CD4-positive, alpha-beta T cell (primary cell): ENCODE measurements at regions of chr11 and their contacts with region 1.

Region 1: DNA sequence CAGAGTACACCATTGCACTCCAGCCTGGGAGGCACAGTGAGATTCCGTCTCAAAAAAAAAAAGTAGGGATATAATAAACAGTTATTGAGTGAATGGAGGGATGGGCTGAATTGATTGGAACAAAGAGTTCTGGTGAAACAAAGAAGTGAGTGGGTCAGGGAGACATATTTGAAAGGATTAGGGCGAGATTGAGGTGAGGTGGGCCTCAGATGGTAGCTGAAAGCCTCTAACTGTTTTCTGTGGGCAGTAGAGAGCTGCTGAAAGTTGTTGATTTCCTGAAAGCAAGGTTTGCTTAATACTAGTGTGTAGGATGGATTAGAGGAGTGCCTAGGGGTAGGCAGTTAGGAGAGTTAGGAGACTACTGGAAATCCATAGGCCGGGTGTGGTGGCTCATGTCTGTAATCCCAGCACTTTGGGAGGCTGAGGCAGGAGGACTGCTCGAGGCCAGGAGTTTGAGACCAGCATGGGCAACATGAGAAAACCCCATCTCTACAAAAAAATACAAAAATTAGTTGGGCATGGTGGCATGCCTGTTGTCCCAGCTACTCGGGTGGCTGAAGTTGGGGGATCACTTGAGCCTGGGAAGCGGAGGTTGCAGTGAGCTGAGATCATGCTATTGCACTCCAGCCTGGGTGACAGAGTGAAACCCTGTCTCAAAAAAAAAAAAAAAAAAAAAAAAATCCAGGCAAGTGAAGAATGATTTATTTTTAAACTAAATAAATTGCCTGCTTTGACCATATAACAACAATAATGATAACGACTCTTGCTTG is 41.4 kb upstream of the PTPRJ start:
- DNase-seq: no peak
- ATAC-seq: no peak
- H3K4me3 ChIP-seq: no peak overlapping the region
- H3K4me3 Mint-ChIP-seq: no peak overlapping the region
- H3K27ac ChIP-seq: no peak overlapping the region
- H3K27ac Mint-ChIP-seq: no peak overlapping the region
- H3K4me1 ChIP-seq: peaks cover 13% of the 10 kb centered on the region
- H3K4me1 Mint-ChIP-seq: peaks cover 17% of the 10 kb centered on the region
- H3K27me3 ChIP-seq: no peaks in the 10 kb centered on the region
- H3K27me3 Mint-ChIP-seq: no peaks in the 10 kb centered on the region
- CTCF ChIP-seq: no peak

Region 2: GRCh38 chr11:47689480-47689879 is 249.5 kb before region 1 on chr11:
- CTCF ChIA-PET with region 1: no interaction called
- POLR2A ChIA-PET with region 1: no interaction called
- intact Hi-C with region 1: no loop called
- DNase-seq: no peak
- ATAC-seq: no peak
- H3K4me3 ChIP-seq: no peak overlapping the region
- H3K4me3 Mint-ChIP-seq: no peak overlapping the region
- H3K27ac ChIP-seq: no peak overlapping the region
- H3K27ac Mint-ChIP-seq: no peak overlapping the region
- H3K4me1 ChIP-seq: no peaks in the 10 kb centered on the region
- H3K4me1 Mint-ChIP-seq: no peaks in the 10 kb centered on the region
- H3K27me3 ChIP-seq: no peaks in the 10 kb centered on the region
- H3K27me3 Mint-ChIP-seq: no peaks in the 10 kb centered on the region
- CTCF ChIP-seq: no peak

Region 3: DNA sequence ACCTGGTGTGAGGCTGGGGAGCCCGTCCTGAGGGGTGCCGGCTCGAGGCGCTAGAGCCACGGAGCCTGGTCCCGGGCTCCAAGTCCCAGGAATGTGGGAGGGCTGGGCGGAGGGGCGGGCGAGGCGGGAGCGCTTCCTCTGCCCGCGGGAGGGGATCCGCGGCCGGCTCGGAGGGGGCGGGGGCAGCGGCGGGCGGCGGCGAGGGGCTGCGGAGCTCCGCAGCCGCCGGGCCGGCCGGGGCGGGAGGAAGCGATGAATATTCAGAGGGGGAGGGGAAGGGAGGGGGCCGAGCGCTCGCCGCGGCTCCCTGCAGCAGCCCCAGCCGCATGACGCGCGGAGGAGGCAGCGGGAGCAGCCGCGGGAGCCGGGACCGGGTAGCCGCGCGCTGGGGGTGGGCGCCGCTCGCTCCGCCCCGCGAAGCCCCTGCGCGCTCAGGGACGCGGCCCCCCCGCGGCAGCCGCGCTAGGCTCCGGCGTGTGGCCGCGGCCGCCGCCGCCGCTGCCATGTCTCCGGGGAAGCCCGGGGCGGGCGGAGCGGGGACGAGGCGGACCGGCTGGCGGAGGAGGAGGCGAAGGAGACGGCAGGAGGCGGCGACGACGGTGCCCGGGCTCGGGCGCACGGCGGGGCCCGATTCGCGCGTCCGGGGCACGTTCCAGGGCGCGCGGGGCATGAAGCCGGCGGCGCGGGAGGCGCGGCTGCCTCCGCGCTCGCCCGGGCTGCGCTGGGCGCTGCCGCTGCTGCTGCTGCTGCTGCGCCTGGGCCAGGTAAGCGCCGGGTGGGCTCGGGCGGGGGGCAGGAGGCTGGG is 41.5 kb after region 1 on chr11 and contains the start of gene PTPRJ:
- CTCF ChIA-PET with region 1: interaction called, 8 read pairs
- POLR2A ChIA-PET with region 1: no interaction called
- intact Hi-C with region 1: loop called in 1 of 2 experiments (anchors 5 kb)
- DNase-seq: peak; percentile 36 to 88 (median 57)
- ATAC-seq: peak; percentile 68
- H3K4me3 ChIP-seq: peak within 1 kb of the TSS; percentile 70
- H3K4me3 Mint-ChIP-seq: peak within 1 kb of the TSS; percentile 98
- H3K27ac ChIP-seq: peak within 1 kb of the TSS in 1 of 2 donors; percentile 41
- H3K27ac Mint-ChIP-seq: peak within 1 kb of the TSS; percentile 91
- H3K4me1 ChIP-seq: peaks cover 39% of the 10 kb centered on the region
- H3K4me1 Mint-ChIP-seq: peaks cover 38% of the 10 kb centered on the region
- H3K27me3 ChIP-seq: no peaks in the 10 kb centered on the region
- H3K27me3 Mint-ChIP-seq: no peaks in the 10 kb centered on the region
- CTCF ChIP-seq: no peak
- total RNA-seq, gene PTPRJ: 26.6 to 28.9 TPM

Region 4: GRCh38 chr11:48020092-48020755 is 81.2 kb after region 1 on chr11:
- CTCF ChIA-PET with region 1: interaction called, 14 read pairs
- POLR2A ChIA-PET with region 1: interaction called, 3 read pairs
- intact Hi-C with region 1: loop called in 1 of 2 experiments (anchors 5 kb)
- DNase-seq: peak in 4 of 14 experiments; percentile 24 to 84 (median 75)
- ATAC-seq: peak; percentile 43
- H3K4me3 ChIP-seq: peak overlapping the region; percentile 6
- H3K4me3 Mint-ChIP-seq: peak overlapping the region; percentile 71
- H3K27ac ChIP-seq: peak overlapping the region; percentile 0 to 68
- H3K27ac Mint-ChIP-seq: peak overlapping the region; percentile 90
- H3K4me1 ChIP-seq: peaks cover 60% of the 10 kb centered on the region
- H3K4me1 Mint-ChIP-seq: peaks cover 74% of the 10 kb centered on the region
- H3K27me3 ChIP-seq: no peaks in the 10 kb centered on the region
- H3K27me3 Mint-ChIP-seq: no peaks in the 10 kb centered on the region
- CTCF ChIP-seq: no peak